ENCODE measurements at regions of chr12 and their contacts with region 1.

Region 1: GRCh38 chr12:54191550-54192022 is 2.8 kb upstream of the SMUG1 start:
- DNase-seq: peak; percentile 87
- ATAC-seq: peak; percentile 60
- H3K4me3 Mint-ChIP-seq: no peak overlapping the region
- H3K27ac Mint-ChIP-seq: no peak overlapping the region
- H3K4me1 Mint-ChIP-seq: peaks cover 18% of the 10 kb centered on the region
- H3K27me3 Mint-ChIP-seq: peaks cover 38% of the 10 kb centered on the region
- CTCF ChIP-seq: peak; percentile 74

Region 2: DNA sequence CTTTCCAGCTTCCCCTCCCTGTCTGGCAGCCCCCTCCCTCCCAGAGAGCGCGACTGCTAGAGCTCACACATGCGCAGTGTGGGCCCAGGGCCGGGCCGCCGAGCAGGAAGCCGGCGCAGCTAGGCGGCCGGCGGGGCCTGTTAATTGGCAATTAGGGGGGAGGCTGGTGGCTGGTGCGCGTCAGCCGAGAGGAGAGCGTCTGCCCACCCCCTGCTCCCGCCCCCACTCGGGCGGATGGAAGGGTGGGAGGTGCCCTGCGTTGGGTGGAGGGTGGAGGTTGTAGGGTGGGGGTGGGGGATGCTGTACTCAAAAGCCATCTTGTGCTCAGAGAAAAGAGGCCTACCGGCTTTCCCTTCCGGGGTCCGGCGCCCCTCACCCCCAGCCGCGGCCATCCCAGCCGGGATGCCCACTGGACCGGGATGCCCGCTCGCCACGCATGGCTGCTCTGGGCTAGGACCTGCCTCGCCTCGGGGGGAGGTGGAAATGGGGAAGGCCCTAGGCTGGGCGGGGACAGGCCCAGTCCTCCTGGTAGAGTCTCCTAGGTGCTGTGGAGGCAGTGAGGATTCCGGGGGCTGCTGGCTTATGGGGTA is 173.6 kb before region 1 on chr12:
- CTCF ChIA-PET with region 1: interaction called, 12 read pairs
- POLR2A ChIA-PET with region 1: interaction called, 3 read pairs
- intact Hi-C with region 1: no loop called
- DNase-seq: peak; percentile 84
- ATAC-seq: peak; percentile 92
- H3K4me3 Mint-ChIP-seq: peak overlapping the region; percentile 76
- H3K27ac Mint-ChIP-seq: no peak overlapping the region
- H3K4me1 Mint-ChIP-seq: peaks cover 15% of the 10 kb centered on the region
- H3K27me3 Mint-ChIP-seq: peaks cover 67% of the 10 kb centered on the region
- CTCF ChIP-seq: no peak

Region 3: DNA sequence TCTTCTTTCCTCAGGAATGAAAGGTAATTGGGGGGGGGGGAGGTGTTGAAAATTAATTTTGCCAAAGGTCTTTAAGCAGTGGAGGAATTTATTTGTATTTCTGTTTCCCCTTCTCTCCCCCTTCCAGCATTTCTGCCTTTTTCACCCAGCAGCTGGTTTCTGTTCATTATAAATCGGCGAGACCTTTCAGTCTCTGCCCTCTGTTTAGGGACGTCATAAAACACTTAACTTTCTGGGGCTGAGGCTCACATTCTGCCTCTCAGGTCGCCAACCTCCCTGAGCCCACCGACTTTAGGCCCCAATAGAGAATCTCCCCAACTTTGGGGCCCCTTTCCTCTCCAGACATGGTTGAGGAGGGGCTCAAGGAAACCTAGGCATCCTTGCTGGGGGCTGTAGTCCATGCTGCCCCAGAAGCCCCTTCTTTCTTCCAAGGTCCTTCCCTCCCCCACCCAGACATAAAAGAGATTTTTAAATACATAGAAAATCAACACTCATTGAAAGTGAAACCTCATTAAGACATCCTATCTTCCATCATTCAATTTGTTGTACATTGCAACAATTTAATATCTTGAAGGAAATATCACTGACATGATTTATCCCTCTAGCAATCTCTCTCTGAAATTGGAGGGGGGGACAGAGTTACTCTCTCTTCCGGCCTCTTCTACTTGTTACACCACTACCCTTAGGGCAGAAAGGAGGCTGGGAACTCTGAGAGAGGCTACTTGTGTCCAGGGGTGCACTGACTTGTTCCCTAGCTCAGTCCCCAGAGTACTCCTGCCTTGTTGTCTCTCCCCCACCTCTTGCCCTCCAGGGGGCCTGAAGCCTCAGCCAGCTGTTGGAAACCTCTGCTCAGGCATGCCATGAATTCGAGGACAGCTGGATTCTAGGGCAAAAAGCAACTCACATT is 165.8 kb before region 1 on chr12:
- CTCF ChIA-PET with region 1: interaction called, 140 read pairs
- POLR2A ChIA-PET with region 1: no interaction called
- intact Hi-C with region 1: no loop called
- DNase-seq: no peak
- ATAC-seq: no peak
- H3K4me3 Mint-ChIP-seq: no peak overlapping the region
- H3K27ac Mint-ChIP-seq: no peak overlapping the region
- H3K4me1 Mint-ChIP-seq: peaks cover 11% of the 10 kb centered on the region
- H3K27me3 Mint-ChIP-seq: peaks cover 72% of the 10 kb centered on the region
- CTCF ChIP-seq: no peak

Region 4: GRCh38 chr12:54207484-54208294 is 16.1 kb after region 1 on chr12:
- CTCF ChIA-PET with region 1: interaction called, 73 read pairs
- POLR2A ChIA-PET with region 1: no interaction called
- intact Hi-C with region 1: no loop called
- DNase-seq: peak; percentile 90
- ATAC-seq: peak; percentile 96
- H3K4me3 Mint-ChIP-seq: no peak overlapping the region
- H3K27ac Mint-ChIP-seq: no peak overlapping the region
- H3K4me1 Mint-ChIP-seq: no peaks in the 10 kb centered on the region
- H3K27me3 Mint-ChIP-seq: peaks cover 15% of the 10 kb centered on the region
- CTCF ChIP-seq: peak; percentile 92

Measured in activated CD8-positive, alpha-beta T cell treated with anti-CD3 and anti-CD28 coated beads for 36 hours (primary cell).